Activated B cell treated with CpG ODN at 0.5 μM for 24 hours (primary cell): ENCODE measurements at regions of chr20 and their contacts with region 1.

Region 1: DNA sequence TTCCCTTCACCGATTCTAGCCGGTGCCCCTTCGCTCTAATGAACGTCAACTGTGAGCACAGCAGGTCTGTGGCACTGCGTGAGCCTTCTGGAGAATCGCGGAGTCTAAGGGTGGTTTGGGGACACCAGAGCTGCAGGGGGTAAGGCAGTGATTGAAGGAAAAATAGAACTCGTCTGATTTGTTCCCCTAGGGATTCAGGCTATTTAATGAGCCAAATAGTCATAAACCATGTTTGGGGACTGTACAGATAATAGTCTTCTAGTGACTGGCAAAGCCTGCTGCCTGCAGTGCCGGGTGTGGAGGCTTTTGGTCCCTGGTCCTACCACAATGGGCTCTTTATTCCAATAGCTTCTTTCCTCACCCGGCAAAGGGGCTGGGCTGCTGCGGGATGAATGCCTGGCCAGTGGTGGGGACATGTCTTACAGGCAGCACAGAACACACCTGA is 11.1 kb upstream of the NTSR1 start:
- DNase-seq: no peak
- ATAC-seq: no peak
- H3K4me3 Mint-ChIP-seq: no peak overlapping the region
- H3K27ac Mint-ChIP-seq: no peak overlapping the region
- H3K4me1 Mint-ChIP-seq: no peaks in the 10 kb centered on the region
- H3K27me3 Mint-ChIP-seq: peaks cover 14% of the 10 kb centered on the region
- CTCF ChIP-seq: no peak

Region 2: DNA sequence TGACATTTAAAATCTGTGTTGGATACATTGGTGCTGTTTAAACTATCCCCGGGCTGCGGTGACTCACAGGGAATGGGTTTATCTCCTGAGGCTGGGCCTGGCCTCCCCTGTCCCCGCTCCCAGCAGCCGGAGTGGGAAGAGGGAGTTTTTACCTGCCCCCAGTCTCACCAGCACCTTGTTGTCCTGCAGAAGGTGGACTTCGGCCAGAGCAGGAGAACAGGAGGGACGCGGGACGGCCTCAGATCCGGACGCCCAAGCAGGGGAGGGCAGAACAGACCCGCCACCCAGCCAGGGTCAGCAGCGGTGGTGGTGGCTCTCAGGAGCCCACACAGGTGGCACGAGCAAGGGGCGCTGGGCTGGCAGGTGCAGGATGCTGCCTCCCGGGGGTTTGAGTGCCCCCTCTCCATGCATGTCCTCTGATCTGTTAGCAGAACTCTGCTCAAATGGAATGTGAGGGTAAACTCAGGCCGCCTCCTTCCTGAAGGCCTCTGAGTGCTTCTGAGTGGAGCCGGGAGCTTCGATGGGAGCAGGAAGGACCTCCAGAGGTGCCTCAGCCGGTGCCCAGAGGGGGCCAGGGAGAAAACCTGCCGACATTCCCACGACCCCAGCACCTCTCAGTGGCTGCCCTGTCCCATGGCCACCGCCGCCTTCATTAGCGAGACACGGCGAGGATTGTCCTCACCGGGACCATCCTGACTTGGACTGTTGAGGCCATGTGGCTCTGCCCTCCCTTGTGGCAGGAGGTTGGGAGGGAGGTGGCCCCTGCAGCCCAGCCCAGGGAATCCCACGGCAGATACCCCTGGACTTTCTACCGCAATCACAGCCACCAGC is 55.4 kb after region 1 on chr20:
- CTCF ChIA-PET with region 1: no interaction called
- POLR2A ChIA-PET with region 1: no interaction called
- intact Hi-C with region 1: loop called (anchors 10 kb)
- DNase-seq: no peak
- ATAC-seq: no peak
- H3K4me3 Mint-ChIP-seq: no peak overlapping the region
- H3K27ac Mint-ChIP-seq: no peak overlapping the region
- H3K4me1 Mint-ChIP-seq: no peaks in the 10 kb centered on the region
- H3K27me3 Mint-ChIP-seq: peaks cover 17% of the 10 kb centered on the region
- CTCF ChIP-seq: no peak